Activated CD4-positive, alpha-beta T cell treated with anti-CD3 and anti-CD28 coated beads, Interleukin-2, amount 10 ng/mL, durations not matched to agents 7 days and 5 days (primary cell): ENCODE measurements at regions of chr19 and their contacts with region 1.

Region 1: GRCh38 chr19:29610563-29611271 is 4.6 kb downstream of the POP4 start:
- DNase-seq: peak; percentile 91
- H3K4me3 Mint-ChIP-seq: no peak overlapping the region
- H3K27ac Mint-ChIP-seq: peak overlapping the region; percentile 61
- H3K4me1 Mint-ChIP-seq: peaks cover 25% of the 10 kb centered on the region
- H3K27me3 Mint-ChIP-seq: no peaks in the 10 kb centered on the region

Region 2: GRCh38 chr19:29587518-29587986 is 23.2 kb before region 1 on chr19:
- CTCF ChIA-PET with region 1: interaction called, 11 read pairs
- POLR2A ChIA-PET with region 1: interaction called, 4 read pairs
- DNase-seq: peak; percentile 80
- H3K4me3 Mint-ChIP-seq: no peak overlapping the region
- H3K27ac Mint-ChIP-seq: peak overlapping the region; percentile 82
- H3K4me1 Mint-ChIP-seq: peaks cover 33% of the 10 kb centered on the region
- H3K27me3 Mint-ChIP-seq: peaks cover 18% of the 10 kb centered on the region

Region 3: DNA sequence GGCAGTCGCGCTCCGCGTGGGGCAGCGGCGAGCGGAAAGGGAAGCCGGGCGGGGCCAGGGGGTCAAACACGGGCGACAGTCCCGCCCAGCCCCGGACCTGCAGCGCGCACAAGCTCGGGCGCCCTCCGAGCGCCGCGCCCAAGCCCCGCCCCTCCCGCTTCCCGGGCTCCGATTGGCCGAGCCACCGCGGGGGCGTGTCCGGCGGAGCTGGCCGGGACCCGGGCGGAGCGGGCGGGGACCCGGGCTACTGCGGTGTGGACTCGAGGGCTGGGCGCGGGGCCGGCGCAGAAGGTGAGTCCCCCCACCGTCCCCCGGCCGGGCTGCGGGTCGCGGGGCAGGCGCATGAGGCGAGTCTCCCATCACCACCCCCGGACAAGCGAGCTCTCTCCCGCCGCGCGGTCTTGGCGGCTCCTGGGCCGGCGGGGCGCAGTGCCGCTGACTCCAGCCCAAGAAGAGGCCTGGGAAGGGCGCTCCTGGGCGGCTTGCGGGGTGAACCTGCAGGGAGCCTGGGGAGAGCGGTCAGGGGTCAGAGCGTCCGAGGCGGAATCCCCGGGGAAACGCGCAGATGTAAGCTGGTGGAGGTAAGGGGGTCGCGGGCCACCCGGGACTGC is 54.6 kb after region 1 on chr19 and contains the start of gene PLEKHF1:
- CTCF ChIA-PET with region 1: interaction called, 49 read pairs
- POLR2A ChIA-PET with region 1: interaction called, 4 read pairs
- DNase-seq: peak; percentile 85
- H3K4me3 Mint-ChIP-seq: peak within 1 kb of the TSS; percentile 88
- H3K27ac Mint-ChIP-seq: peak within 1 kb of the TSS; percentile 95
- H3K4me1 Mint-ChIP-seq: peaks cover 69% of the 10 kb centered on the region
- H3K27me3 Mint-ChIP-seq: no peaks in the 10 kb centered on the region
- total RNA-seq, gene PLEKHF1: 49.4 to 52.1 TPM

Region 4: DNA sequence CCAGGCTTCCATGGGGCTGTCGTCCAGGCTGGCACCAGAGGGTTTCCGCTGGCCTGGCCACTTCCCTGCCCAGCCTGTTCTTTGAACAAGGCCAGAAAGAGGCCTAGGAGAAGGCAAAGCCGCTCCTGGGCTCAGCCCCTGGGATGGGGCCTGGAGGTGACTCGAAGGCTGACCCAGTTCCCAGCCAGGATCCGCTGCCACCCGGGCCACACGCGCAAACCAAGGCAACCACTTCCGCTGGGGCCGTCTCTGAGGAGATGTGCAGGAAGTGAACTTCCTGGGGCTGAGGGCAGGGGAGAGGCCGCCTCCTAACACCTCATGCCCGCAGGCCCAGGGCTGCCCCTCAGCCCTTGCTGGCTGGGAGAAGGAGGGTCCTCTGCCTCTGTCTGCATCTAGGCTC is 69.7 kb after region 1 on chr19:
- CTCF ChIA-PET with region 1: interaction called, 21 read pairs
- POLR2A ChIA-PET with region 1: no interaction called
- DNase-seq: peak; percentile 86
- H3K4me3 Mint-ChIP-seq: peak overlapping the region; percentile 17
- H3K27ac Mint-ChIP-seq: peak overlapping the region; percentile 87
- H3K4me1 Mint-ChIP-seq: peaks cover 75% of the 10 kb centered on the region
- H3K27me3 Mint-ChIP-seq: no peaks in the 10 kb centered on the region

Region 5: GRCh38 chr19:29714953-29715700 is 104.4 kb after region 1 on chr19 and contains the start of gene C19orf12:
- CTCF ChIA-PET with region 1: interaction called, 46 read pairs
- POLR2A ChIA-PET with region 1: interaction called, 7 read pairs
- DNase-seq: peak; percentile 46
- H3K4me3 Mint-ChIP-seq: peak within 1 kb of the TSS; percentile 94
- H3K27ac Mint-ChIP-seq: peak within 1 kb of the TSS; percentile 99
- H3K4me1 Mint-ChIP-seq: peaks cover 57% of the 10 kb centered on the region
- H3K27me3 Mint-ChIP-seq: no peaks in the 10 kb centered on the region
- total RNA-seq, gene C19orf12: 36.5 to 38.8 TPM